Activated CD8-positive, alpha-beta T cell treated with anti-CD3 and anti-CD28 coated beads for 36 hours (primary cell): ENCODE measurements at regions of chr6 and their contacts with region 1.

Region 1: GRCh38 chr6:122459213-122459612 is 12.4 kb downstream of the SERINC1 start:
- DNase-seq: no peak
- ATAC-seq: no peak
- H3K4me3 Mint-ChIP-seq: no peak overlapping the region
- H3K27ac Mint-ChIP-seq: peak overlapping the region; percentile 89
- H3K4me1 Mint-ChIP-seq: peaks cover 77% of the 10 kb centered on the region
- H3K27me3 Mint-ChIP-seq: no peaks in the 10 kb centered on the region
- CTCF ChIP-seq: no peak

Region 2: DNA sequence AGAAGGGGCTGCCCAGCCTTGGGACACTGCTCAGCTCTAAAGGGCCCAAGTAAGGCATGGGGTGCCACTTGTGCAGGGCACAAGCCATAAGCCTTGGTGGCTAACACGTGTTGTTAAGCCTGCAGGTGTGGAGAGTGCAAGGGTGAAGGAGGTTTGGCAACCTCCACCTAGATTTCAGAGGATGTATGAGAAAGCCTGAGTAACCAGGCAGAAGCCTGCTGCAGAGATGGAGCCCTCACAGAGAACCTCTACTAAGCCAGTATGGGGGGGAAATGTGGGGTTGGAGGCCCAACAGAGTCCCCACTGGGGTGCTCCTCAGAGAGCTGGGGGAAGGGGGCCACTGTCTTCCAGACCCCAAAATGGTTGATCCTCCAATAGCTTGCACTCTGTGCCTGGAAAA is 20.2 kb before region 1 on chr6:
- CTCF ChIA-PET with region 1: no interaction called
- POLR2A ChIA-PET with region 1: interaction called, 10 read pairs
- intact Hi-C with region 1: no loop called
- DNase-seq: no peak
- ATAC-seq: no peak
- H3K4me3 Mint-ChIP-seq: no peak overlapping the region
- H3K27ac Mint-ChIP-seq: no peak overlapping the region
- H3K4me1 Mint-ChIP-seq: no peaks in the 10 kb centered on the region
- H3K27me3 Mint-ChIP-seq: no peaks in the 10 kb centered on the region
- CTCF ChIP-seq: no peak